Endothelial cell of umbilical vein (primary cell): ENCODE measurements at regions of chr1 and their contacts with region 1.

Region 1: GRCh38 chr1:78114034-78114956 is 68.5 kb downstream of the GIPC2 start:
- DNase-seq: peak; percentile 93
- H3K4me3 ChIP-seq: no peak overlapping the region
- H3K27ac ChIP-seq: no peak overlapping the region
- H3K4me1 ChIP-seq: no peaks in the 10 kb centered on the region
- H3K27me3 ChIP-seq: no peaks in the 10 kb centered on the region
- CTCF ChIP-seq: peak; percentile 57 to 76
- POLR2A ChIP-seq: no peak

Region 2: GRCh38 chr1:77683160-77684148 is 430.8 kb before region 1 on chr1:
- CTCF ChIA-PET with region 1: no interaction called
- POLR2A ChIA-PET with region 1: no interaction called
- dilution Hi-C with region 1: no loop called
- intact Hi-C with region 1: loop called (anchors 1 kb)
- DNase-seq: peak; percentile 92
- H3K4me3 ChIP-seq: peak overlapping the region; percentile 42 to 73 (median 52)
- H3K27ac ChIP-seq: peak overlapping the region; percentile 69
- H3K4me1 ChIP-seq: peaks cover 23% of the 10 kb centered on the region
- H3K27me3 ChIP-seq: no peaks in the 10 kb centered on the region
- CTCF ChIP-seq: peak; percentile 86 to 92
- POLR2A ChIP-seq: no peak

Region 3: GRCh38 chr1:77978969-77979876 is 135.1 kb before region 1 on chr1 and contains the start of gene FUBP1:
- CTCF ChIA-PET with region 1: interaction called, 70 read pairs
- POLR2A ChIA-PET with region 1: interaction called, 7 read pairs
- dilution Hi-C with region 1: no loop called
- intact Hi-C with region 1: loop called (anchors 1 kb)
- DNase-seq: peak; percentile 99
- H3K4me3 ChIP-seq: peak within 1 kb of the TSS; percentile 43 to 100 (median 95)
- H3K27ac ChIP-seq: peak within 1 kb of the TSS; percentile 100
- H3K4me1 ChIP-seq: peaks cover 38% of the 10 kb centered on the region
- H3K27me3 ChIP-seq: no peaks in the 10 kb centered on the region
- CTCF ChIP-seq: peak; percentile 66 to 76
- POLR2A ChIP-seq: peak; percentile 98
- total RNA-seq, gene FUBP1: 163 and 166 TPM in 2 replicates

Region 4: DNA sequence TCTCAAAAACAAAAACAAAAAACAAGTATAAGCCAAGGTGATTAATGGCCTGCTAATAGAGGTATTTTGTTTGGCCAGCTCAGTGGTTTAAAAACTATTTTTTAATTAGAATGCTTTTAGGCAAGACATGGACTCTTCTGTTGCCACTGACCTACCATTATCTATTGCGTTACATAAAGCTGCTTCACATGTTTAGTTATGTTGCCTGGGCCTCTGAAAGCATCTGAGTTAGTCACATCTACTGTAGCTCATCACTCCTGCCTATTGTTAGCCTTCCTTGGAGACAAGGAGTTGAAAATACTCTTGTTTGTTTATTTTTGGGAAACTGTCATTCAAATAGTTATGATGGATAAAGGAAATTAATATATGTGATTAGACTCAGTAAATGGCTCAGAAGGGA is 95.3 kb before region 1 on chr1:
- CTCF ChIA-PET with region 1: interaction called, 250 read pairs
- POLR2A ChIA-PET with region 1: no interaction called
- dilution Hi-C with region 1: no loop called
- intact Hi-C with region 1: no loop called
- DNase-seq: no peak
- H3K4me3 ChIP-seq: no peak overlapping the region
- H3K27ac ChIP-seq: no peak overlapping the region
- H3K4me1 ChIP-seq: no peaks in the 10 kb centered on the region
- H3K27me3 ChIP-seq: no peaks in the 10 kb centered on the region
- CTCF ChIP-seq: no peak
- POLR2A ChIP-seq: no peak

Region 5: GRCh38 chr1:78054559-78054958 is 59.7 kb before region 1 on chr1:
- CTCF ChIA-PET with region 1: interaction called, 23 read pairs
- POLR2A ChIA-PET with region 1: no interaction called
- dilution Hi-C with region 1: no loop called
- intact Hi-C with region 1: no loop called
- DNase-seq: peak; percentile 52
- H3K4me3 ChIP-seq: no peak overlapping the region
- H3K27ac ChIP-seq: no peak overlapping the region
- H3K4me1 ChIP-seq: peaks cover 25% of the 10 kb centered on the region
- H3K27me3 ChIP-seq: no peaks in the 10 kb centered on the region
- CTCF ChIP-seq: no peak
- POLR2A ChIP-seq: no peak

Region 6: DNA sequence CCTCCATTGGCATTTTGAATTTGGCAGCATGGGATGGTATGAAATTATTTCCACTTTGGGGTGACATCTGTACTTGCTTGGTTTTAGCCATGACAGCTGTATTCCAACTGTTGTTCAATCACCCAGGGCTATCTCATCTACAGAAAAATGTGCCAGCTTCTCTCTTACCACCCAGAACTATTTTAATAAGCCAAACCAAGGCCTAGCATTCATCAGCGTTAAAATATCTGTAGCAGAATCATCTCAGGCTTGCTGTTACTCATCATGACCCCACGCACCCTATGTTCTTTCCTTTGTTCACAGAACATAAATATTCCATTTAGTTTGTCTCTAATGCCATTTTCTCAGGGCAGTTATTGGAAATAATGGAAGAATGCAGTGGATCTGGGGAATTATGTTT is 18.7 kb before region 1 on chr1:
- CTCF ChIA-PET with region 1: interaction called, 49 read pairs
- POLR2A ChIA-PET with region 1: interaction called, 3 read pairs
- dilution Hi-C with region 1: no loop called
- intact Hi-C with region 1: no loop called
- DNase-seq: peak; percentile 86
- H3K4me3 ChIP-seq: no peak overlapping the region
- H3K27ac ChIP-seq: peak overlapping the region; percentile 91
- H3K4me1 ChIP-seq: peaks cover 46% of the 10 kb centered on the region
- H3K27me3 ChIP-seq: no peaks in the 10 kb centered on the region
- CTCF ChIP-seq: no peak
- POLR2A ChIP-seq: no peak

Region 7: DNA sequence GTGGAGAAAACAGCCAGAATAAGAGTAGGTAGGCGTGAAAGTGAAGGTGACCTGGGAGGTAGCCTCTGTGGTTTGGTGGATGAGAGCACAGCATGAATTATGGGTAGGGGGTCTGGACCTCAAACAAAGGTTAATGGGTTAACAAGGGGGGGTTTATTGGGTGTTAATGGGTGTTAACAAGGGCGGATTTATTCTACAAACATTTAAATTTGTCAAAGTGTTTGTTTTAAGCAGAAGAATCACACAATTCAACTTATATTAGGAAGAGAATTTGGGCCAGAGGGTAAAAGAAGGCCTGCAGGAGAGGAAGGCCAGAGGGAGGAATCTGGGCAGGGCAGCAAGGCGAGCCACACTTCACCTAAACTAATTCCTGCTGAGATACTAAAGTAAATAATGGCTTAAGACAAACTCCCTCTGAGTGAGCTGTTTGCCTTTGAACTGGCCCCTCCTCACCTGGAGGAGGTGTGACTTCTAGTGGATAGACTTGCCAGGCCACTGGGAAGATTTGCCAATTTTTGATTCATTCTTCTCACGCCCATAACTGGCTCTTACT is 123.1 kb after region 1 on chr1:
- CTCF ChIA-PET with region 1: no interaction called
- POLR2A ChIA-PET with region 1: no interaction called
- dilution Hi-C with region 1: no loop called
- intact Hi-C with region 1: no loop called
- DNase-seq: no peak
- H3K4me3 ChIP-seq: no peak overlapping the region
- H3K27ac ChIP-seq: no peak overlapping the region
- H3K4me1 ChIP-seq: no peaks in the 10 kb centered on the region
- H3K27me3 ChIP-seq: peaks cover 0 to 9% of the 10 kb centered on the region in 2 experiments
- CTCF ChIP-seq: no peak
- POLR2A ChIP-seq: no peak